ENCODE measurements at regions of chr3 and their contacts with region 1.

Region 1: GRCh38 chr3:150870396-150870795 is 34.8 kb downstream of the MINDY4B start:
- DNase-seq: no peak
- ATAC-seq: no peak
- H3K4me3 ChIP-seq: no peak overlapping the region
- H3K27ac ChIP-seq: no peak overlapping the region
- H3K4me1 ChIP-seq: no peaks in the 10 kb centered on the region
- H3K27me3 ChIP-seq: peaks cover 0 to 13% of the 10 kb centered on the region in 2 experiments; a peak in 2 of 5 replicates
- CTCF ChIP-seq: no peak
- EP300 ChIP-seq: no peak
- POLR2A ChIP-seq: no peak
- RAD21 ChIP-seq: no peak

Region 2: DNA sequence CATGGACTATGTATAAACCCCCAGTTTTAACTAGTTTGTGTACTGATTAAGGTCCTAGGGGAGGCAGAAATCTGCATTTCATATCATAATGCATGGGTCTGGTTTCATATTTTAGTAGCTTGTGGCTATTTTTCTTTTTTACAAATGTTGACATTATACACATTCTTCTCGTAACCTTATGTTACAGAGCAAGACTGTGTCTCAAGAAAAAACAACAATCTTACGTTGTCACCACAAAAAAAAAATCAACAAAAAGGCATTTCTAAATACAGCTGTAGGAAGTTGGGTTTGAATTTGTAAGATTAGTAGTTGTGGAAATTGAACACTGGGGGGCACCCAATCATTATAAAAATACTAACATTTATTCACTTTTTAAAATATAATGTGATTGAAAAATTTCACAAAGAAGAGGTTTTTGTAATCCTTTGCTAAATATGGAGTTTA is 342.0 kb before region 1 on chr3:
- CTCF ChIA-PET with region 1: interaction called, 8 read pairs
- POLR2A ChIA-PET with region 1: no interaction called
- in situ Hi-C with region 1: loop called (anchors 10 kb)
- intact Hi-C with region 1: no loop called
- DNase-seq: no peak
- ATAC-seq: no peak
- H3K4me3 ChIP-seq: no peak overlapping the region
- H3K27ac ChIP-seq: no peak overlapping the region
- H3K4me1 ChIP-seq: no peaks in the 10 kb centered on the region; the same call in 1 of the 2 replicates
- H3K27me3 ChIP-seq: no peaks in the 10 kb centered on the region; a peak in 1 of 5 replicates
- CTCF ChIP-seq: peak; percentile 20; the same call in 1 of the 2 replicates
- EP300 ChIP-seq: no peak
- POLR2A ChIP-seq: no peak
- RAD21 ChIP-seq: no peak

Region 3: GRCh38 chr3:150589759-150590158 is 280.6 kb before region 1 on chr3:
- CTCF ChIA-PET with region 1: no interaction called
- POLR2A ChIA-PET with region 1: no interaction called
- in situ Hi-C with region 1: no loop called
- intact Hi-C with region 1: loop called (anchors 5 kb)
- DNase-seq: no peak
- ATAC-seq: peak; percentile 16; the same call in 1 of the 3 replicates
- H3K4me3 ChIP-seq: no peak overlapping the region
- H3K27ac ChIP-seq: no peak overlapping the region
- H3K4me1 ChIP-seq: no peaks in the 10 kb centered on the region
- H3K27me3 ChIP-seq: no peaks in the 10 kb centered on the region
- CTCF ChIP-seq: no peak
- EP300 ChIP-seq: no peak
- POLR2A ChIP-seq: no peak
- RAD21 ChIP-seq: no peak

Region 4: GRCh38 chr3:150787741-150788370 is 82.5 kb before region 1 on chr3:
- CTCF ChIA-PET with region 1: interaction called, 21 read pairs
- POLR2A ChIA-PET with region 1: no interaction called
- in situ Hi-C with region 1: loop called (anchors 5 kb)
- intact Hi-C with region 1: loop called (anchors 1 kb)
- DNase-seq: peak; percentile 53
- ATAC-seq: peak; percentile 95
- H3K4me3 ChIP-seq: no peak overlapping the region
- H3K27ac ChIP-seq: no peak overlapping the region
- H3K4me1 ChIP-seq: peaks cover 7% of the 10 kb centered on the region; the same call in 1 of the 2 replicates
- H3K27me3 ChIP-seq: peaks cover 2 to 10% of the 10 kb centered on the region in 2 experiments; a peak in 2 of 5 replicates
- CTCF ChIP-seq: peak; percentile 94
- EP300 ChIP-seq: no peak
- POLR2A ChIP-seq: no peak
- RAD21 ChIP-seq: peak; percentile 78

Measured in HepG2 (cell line).